A549 (cell line): ENCODE measurements at regions of chr10 and their contacts with region 1.

Region 1: DNA sequence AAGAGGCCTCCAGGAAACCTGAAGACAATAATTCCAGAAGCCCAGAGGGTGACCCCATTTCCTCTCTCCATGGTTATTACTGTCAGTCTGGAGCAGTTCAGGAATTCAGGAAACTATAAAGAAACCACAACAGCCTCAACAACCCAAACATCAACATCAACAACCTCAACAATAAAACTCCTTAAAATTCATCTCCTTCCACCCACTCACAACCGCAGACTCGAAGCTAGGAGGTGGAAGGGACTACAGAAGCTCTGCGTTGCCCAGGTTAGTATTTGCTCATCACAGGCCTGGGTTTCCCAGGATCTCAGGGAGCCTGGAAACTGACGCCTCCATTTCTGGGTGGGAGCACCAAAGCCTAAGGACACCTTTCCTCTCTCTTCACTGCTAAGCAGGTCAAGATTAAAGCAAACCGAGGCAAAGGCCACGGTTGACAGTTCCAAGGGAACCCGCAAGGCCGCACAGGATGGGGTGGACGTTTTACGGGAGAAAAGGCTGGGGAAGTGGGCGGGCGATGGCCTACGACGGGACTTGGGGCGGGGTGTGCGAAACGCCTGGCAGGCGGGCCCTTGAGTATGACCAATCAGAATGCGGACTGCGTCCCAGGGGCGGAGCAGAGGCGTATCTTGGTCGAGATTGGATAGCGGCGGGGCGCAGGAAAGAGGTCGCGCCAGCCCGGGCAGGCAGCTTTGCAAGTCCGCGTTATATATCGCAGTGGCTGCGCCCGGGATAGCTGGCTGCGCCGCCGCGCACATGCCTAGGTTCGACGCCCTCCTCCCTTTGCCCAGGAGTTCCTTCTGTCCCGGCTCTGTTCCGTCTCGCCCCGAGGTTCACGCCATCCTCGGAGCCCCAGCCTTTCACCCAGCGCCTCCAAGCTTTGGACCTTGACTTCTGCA is at the start of gene ELOVL3:
- DNase-seq: peak; percentile 94 to 98
- ATAC-seq: peak; percentile 88 to 94
- H3K4me3 ChIP-seq: peak within 1 kb of the TSS; percentile 36
- H3K27ac ChIP-seq: peak within 1 kb of the TSS; percentile 55 to 56
- H3K4me1 ChIP-seq: peaks cover 17% of the 10 kb centered on the region; the same call in 2 of the 3 replicates
- CTCF ChIP-seq: no peak
- EP300 ChIP-seq: no peak
- POLR2A ChIP-seq: peak; percentile 23; the same call in 1 of the 2 replicates
- RAD21 ChIP-seq: no peak
- polyA plus RNA-seq, gene ELOVL3: 0.53 and 0.86 TPM in 2 replicates

Region 2: GRCh38 chr10:102175415-102175814 is 50.5 kb before region 1 on chr10:
- CTCF ChIA-PET with region 1: interaction called, 111 read pairs
- POLR2A ChIA-PET with region 1: no interaction called
- DNase-seq: no peak
- ATAC-seq: peak in 1 of 2 experiments; percentile 18; a peak in 1 of 6 replicates
- H3K4me3 ChIP-seq: no peak overlapping the region
- H3K27ac ChIP-seq: no peak overlapping the region
- H3K4me1 ChIP-seq: no peaks in the 10 kb centered on the region; the same call in 2 of the 3 replicates
- CTCF ChIP-seq: no peak
- EP300 ChIP-seq: no peak
- POLR2A ChIP-seq: no peak
- RAD21 ChIP-seq: no peak

Region 3: GRCh38 chr10:102262744-102263370 is 37.0 kb after region 1 on chr10:
- CTCF ChIA-PET with region 1: interaction called, 39 read pairs
- POLR2A ChIA-PET with region 1: interaction called, 3 read pairs
- DNase-seq: no peak
- ATAC-seq: no peak
- H3K4me3 ChIP-seq: no peak overlapping the region
- H3K27ac ChIP-seq: no peak overlapping the region
- H3K4me1 ChIP-seq: no peaks in the 10 kb centered on the region
- CTCF ChIP-seq: no peak
- EP300 ChIP-seq: no peak
- POLR2A ChIP-seq: no peak
- RAD21 ChIP-seq: no peak

Region 4: GRCh38 chr10:102327002-102327401 is 101.1 kb after region 1 on chr10:
- CTCF ChIA-PET with region 1: interaction called, 34 read pairs
- POLR2A ChIA-PET with region 1: no interaction called
- DNase-seq: no peak
- ATAC-seq: no peak
- H3K4me3 ChIP-seq: no peak overlapping the region
- H3K27ac ChIP-seq: no peak overlapping the region
- H3K4me1 ChIP-seq: no peaks in the 10 kb centered on the region
- CTCF ChIP-seq: no peak
- EP300 ChIP-seq: no peak
- POLR2A ChIP-seq: no peak
- RAD21 ChIP-seq: no peak

Region 5: DNA sequence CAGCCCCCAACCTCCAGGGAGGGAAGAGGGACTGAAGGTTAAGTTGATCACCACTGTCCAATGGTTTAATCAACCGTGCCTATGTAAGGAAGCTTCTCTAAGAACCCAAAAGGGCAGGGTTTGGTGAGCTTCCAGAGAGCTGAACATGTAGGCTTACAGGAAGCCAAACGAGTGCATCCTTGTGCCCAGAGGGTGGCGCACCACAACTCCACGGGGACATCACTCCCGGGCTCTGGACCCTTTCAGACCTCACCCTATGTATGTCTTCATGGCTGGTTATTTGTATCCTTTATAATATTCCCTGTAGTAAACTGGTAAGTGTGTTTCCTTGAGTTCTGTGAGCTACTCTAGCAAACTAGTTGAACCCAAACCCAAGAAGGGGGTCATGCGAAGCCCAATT is 158.2 kb after region 1 on chr10:
- CTCF ChIA-PET with region 1: interaction called, 140 read pairs
- POLR2A ChIA-PET with region 1: no interaction called
- DNase-seq: no peak
- ATAC-seq: peak in 1 of 2 experiments; percentile 63; a peak in 3 of 6 replicates
- H3K4me3 ChIP-seq: no peak overlapping the region
- H3K27ac ChIP-seq: no peak overlapping the region
- H3K4me1 ChIP-seq: no peaks in the 10 kb centered on the region
- CTCF ChIP-seq: no peak
- EP300 ChIP-seq: no peak
- POLR2A ChIP-seq: no peak
- RAD21 ChIP-seq: no peak

Region 6: GRCh38 chr10:102476466-102477141 is 250.7 kb after region 1 on chr10:
- CTCF ChIA-PET with region 1: interaction called, 25 read pairs
- POLR2A ChIA-PET with region 1: no interaction called
- DNase-seq: no peak
- ATAC-seq: no peak
- H3K4me3 ChIP-seq: no peak overlapping the region
- H3K27ac ChIP-seq: no peak overlapping the region
- H3K4me1 ChIP-seq: no peaks in the 10 kb centered on the region
- CTCF ChIP-seq: no peak
- EP300 ChIP-seq: no peak
- POLR2A ChIP-seq: no peak
- RAD21 ChIP-seq: no peak